ENCODE measurements at regions of chr10 and their contacts with region 1.

Region 1: DNA sequence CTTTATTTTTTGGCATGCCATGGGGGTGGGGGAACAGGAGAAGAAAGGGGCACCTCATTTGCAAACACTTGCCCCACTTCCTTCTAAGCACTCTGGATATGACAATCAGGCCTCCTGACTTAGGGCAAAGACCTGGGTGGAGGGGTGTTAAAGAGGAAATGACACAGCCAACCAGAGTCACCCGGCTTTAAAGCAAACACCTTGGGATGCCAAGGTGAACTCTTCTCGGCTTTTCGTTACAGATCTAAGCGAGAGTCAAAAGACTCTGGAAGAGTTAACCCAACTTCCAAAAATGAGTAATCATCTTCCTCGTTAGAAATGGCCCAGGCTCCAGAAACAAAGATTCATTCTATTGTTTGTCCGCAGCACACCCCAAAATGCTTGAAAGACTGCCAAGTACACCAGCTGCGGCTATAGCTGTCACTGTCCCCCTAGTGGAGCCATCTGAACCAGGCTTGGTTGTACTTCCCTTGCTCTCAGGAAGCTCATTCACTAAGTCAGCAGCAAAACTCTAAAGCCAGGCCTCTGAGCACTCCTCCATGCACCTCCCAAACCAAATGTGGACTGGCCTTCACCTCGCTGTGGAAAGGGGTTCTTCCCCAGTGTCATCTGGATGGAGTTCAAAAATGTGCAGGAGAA is 24.8 kb downstream of the FAM53B start:
- DNase-seq: peak in 8 of 9 donors; percentile 49 to 85 (median 80)
- ATAC-seq: peak; percentile 63
- H3K4me3 ChIP-seq: peak overlapping the region; percentile 19
- H3K4me3 Mint-ChIP-seq: peak overlapping the region; percentile 46 to 91 (median 73)
- H3K27ac ChIP-seq: peak overlapping the region; percentile 72
- H3K27ac Mint-ChIP-seq: peak overlapping the region; percentile 83 to 99 (median 94)
- H3K4me1 ChIP-seq: peaks cover 82 to 96% of the 10 kb centered on the region in 2 donors
- H3K4me1 Mint-ChIP-seq: peaks cover 80 to 99% (median 88%) of the 10 kb centered on the region in 7 donors
- H3K27me3 ChIP-seq: no peaks in the 10 kb centered on the region
- H3K27me3 Mint-ChIP-seq: no peaks in the 10 kb centered on the region

Region 2: GRCh38 chr10:124530215-124530665 is 189.1 kb before region 1 on chr10:
- CTCF ChIA-PET with region 1: interaction called, 4 read pairs
- POLR2A ChIA-PET with region 1: interaction called, 3 read pairs
- intact Hi-C with region 1: loop called in 1 of 2 experiments (anchors 1 kb)
- DNase-seq: peak; percentile 68 to 87 (median 80)
- ATAC-seq: peak; percentile 95
- H3K4me3 ChIP-seq: no peak overlapping the region
- H3K4me3 Mint-ChIP-seq: peak overlapping the region in 3 of 10 donors; percentile 18 to 59 (median 21)
- H3K27ac ChIP-seq: no peak overlapping the region
- H3K27ac Mint-ChIP-seq: peak overlapping the region in 3 of 9 donors; percentile 14 to 53 (median 38)
- H3K4me1 ChIP-seq: no peaks in the 10 kb centered on the region
- H3K4me1 Mint-ChIP-seq: peaks cover 3 to 16% (median 5%) of the 10 kb centered on the region in 7 donors
- H3K27me3 ChIP-seq: no peaks in the 10 kb centered on the region
- H3K27me3 Mint-ChIP-seq: peaks cover 0 to 7% (median 0%) of the 10 kb centered on the region in 5 donors

Region 3: GRCh38 chr10:124626759-124627380 is 92.5 kb before region 1 on chr10:
- CTCF ChIA-PET with region 1: interaction called, 14 read pairs
- POLR2A ChIA-PET with region 1: interaction called, 17 read pairs
- intact Hi-C with region 1: loop called in 1 of 2 experiments (anchors 1 kb)
- DNase-seq: peak in 6 of 9 donors; percentile 29 to 57 (median 40)
- ATAC-seq: peak; percentile 77
- H3K4me3 ChIP-seq: peak overlapping the region; percentile 1
- H3K4me3 Mint-ChIP-seq: peak overlapping the region in 9 of 10 donors; percentile 46 to 71 (median 63)
- H3K27ac ChIP-seq: peak overlapping the region; percentile 16
- H3K27ac Mint-ChIP-seq: peak overlapping the region; percentile 71 to 91 (median 83)
- H3K4me1 ChIP-seq: peaks cover 34 to 38% of the 10 kb centered on the region in 2 donors
- H3K4me1 Mint-ChIP-seq: peaks cover 25 to 58% (median 48%) of the 10 kb centered on the region in 7 donors
- H3K27me3 ChIP-seq: no peaks in the 10 kb centered on the region
- H3K27me3 Mint-ChIP-seq: no peaks in the 10 kb centered on the region

Region 4: GRCh38 chr10:124647421-124648130 is 71.8 kb before region 1 on chr10:
- CTCF ChIA-PET with region 1: interaction called, 131 read pairs
- POLR2A ChIA-PET with region 1: interaction called, 63 read pairs
- intact Hi-C with region 1: loop called (anchors 1 kb)
- DNase-seq: peak in 8 of 9 donors; percentile 63 to 79 (median 72)
- ATAC-seq: peak; percentile 85
- H3K4me3 ChIP-seq: peak overlapping the region; percentile 34
- H3K4me3 Mint-ChIP-seq: peak overlapping the region; percentile 69 to 87 (median 80)
- H3K27ac ChIP-seq: peak overlapping the region; percentile 62
- H3K27ac Mint-ChIP-seq: peak overlapping the region; percentile 86 to 97 (median 95)
- H3K4me1 ChIP-seq: peaks cover 68 to 79% of the 10 kb centered on the region in 2 donors
- H3K4me1 Mint-ChIP-seq: peaks cover 46 to 100% (median 87%) of the 10 kb centered on the region in 7 donors
- H3K27me3 ChIP-seq: no peaks in the 10 kb centered on the region
- H3K27me3 Mint-ChIP-seq: no peaks in the 10 kb centered on the region

Region 5: GRCh38 chr10:124671486-124672075 is 47.8 kb before region 1 on chr10:
- CTCF ChIA-PET with region 1: interaction called, 25 read pairs
- POLR2A ChIA-PET with region 1: interaction called, 24 read pairs
- intact Hi-C with region 1: no loop called
- DNase-seq: peak in 5 of 9 donors; percentile 31 to 60 (median 48)
- ATAC-seq: peak; percentile 71
- H3K4me3 ChIP-seq: peak overlapping the region; percentile 34
- H3K4me3 Mint-ChIP-seq: peak overlapping the region in 9 of 10 donors; percentile 55 to 93 (median 73)
- H3K27ac ChIP-seq: peak overlapping the region; percentile 19
- H3K27ac Mint-ChIP-seq: peak overlapping the region; percentile 23 to 93 (median 89)
- H3K4me1 ChIP-seq: peaks cover 83 to 97% of the 10 kb centered on the region in 2 donors
- H3K4me1 Mint-ChIP-seq: peaks cover 40 to 92% (median 82%) of the 10 kb centered on the region in 7 donors
- H3K27me3 ChIP-seq: no peaks in the 10 kb centered on the region
- H3K27me3 Mint-ChIP-seq: no peaks in the 10 kb centered on the region

Region 6: DNA sequence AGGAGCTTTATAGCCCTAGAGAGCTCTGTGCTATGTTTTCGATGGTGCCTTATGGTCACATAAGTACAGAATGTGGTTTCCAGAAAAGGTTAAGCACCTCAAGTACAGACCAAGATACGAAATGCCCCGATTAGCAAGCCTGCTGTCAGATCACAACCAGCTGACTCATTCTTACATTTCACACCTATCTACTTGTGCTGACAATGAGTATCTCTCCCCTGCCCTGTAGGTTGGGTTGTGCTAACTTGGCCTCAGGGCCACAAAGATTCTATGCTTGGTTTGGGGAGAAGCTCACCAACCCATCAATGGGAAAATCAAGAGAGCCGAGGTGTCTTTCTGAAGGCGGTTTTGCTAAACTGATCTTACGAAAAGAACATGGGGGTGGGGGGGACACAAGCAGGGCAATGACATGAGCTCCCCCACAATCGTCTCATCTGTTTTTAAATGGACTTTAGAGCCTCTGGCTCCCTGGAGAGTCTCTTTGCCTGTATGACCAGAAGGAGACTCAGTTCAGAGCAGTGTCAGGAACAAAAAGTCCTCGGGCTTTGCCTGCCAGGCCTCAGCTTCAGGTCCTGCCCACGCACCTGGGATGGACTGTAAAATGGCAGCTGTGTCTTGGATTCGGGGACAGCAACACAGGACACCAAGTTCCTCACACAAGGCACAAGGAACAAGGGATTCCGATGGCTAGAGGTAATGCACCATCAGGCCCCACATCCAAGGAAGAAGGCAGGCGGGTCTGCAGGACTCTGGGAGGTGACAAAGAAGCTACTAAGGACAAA is 30.3 kb before region 1 on chr10:
- CTCF ChIA-PET with region 1: interaction called, 55 read pairs
- POLR2A ChIA-PET with region 1: interaction called, 7 read pairs
- intact Hi-C with region 1: loop called (anchors 1 kb)
- DNase-seq: peak in 1 of 9 donors; percentile 61
- ATAC-seq: peak; percentile 87
- H3K4me3 ChIP-seq: no peak overlapping the region
- H3K4me3 Mint-ChIP-seq: peak overlapping the region in 1 of 10 donors; percentile 69
- H3K27ac ChIP-seq: no peak overlapping the region
- H3K27ac Mint-ChIP-seq: peak overlapping the region in 6 of 9 donors; percentile 15 to 88 (median 30)
- H3K4me1 ChIP-seq: peaks cover 24 to 90% of the 10 kb centered on the region in 2 donors
- H3K4me1 Mint-ChIP-seq: peaks cover 39 to 73% (median 49%) of the 10 kb centered on the region in 7 donors
- H3K27me3 ChIP-seq: no peaks in the 10 kb centered on the region
- H3K27me3 Mint-ChIP-seq: no peaks in the 10 kb centered on the region

Region 7: DNA sequence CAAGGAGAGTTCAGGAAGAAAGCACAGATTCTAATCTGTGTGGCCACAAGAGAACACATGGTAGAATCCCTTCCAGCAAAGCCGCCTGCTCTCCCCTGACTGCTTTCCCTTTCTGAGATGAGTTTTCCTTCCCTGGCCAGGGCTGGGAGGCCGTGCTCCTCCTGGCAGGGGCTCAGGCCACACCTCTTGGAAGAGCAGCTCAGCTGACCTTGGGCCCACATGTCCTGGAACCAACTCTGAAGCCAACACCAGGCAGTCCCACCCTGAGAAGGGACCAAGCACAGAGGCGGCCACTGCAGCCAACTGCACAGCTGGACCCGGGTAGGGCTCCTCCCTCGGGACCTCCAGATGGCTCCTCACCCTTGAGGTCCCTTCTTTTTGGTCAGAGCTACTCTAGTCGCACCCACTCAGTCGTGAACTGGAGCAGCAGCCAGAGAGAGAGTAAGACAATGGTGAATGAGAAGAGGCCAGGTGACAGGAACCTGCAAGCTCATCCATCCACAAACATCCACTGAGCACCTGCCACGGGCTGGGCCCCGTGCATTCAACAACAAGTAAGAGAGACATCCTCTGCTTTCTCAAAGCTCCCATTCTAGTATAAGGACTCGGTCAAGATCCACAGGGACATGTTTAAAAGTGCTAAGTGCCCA is 15.4 kb before region 1 on chr10:
- CTCF ChIA-PET with region 1: interaction called, 81 read pairs
- POLR2A ChIA-PET with region 1: interaction called, 271 read pairs
- intact Hi-C with region 1: loop called in 1 of 2 experiments (anchors 1 kb)
- DNase-seq: no peak
- ATAC-seq: no peak
- H3K4me3 ChIP-seq: no peak overlapping the region
- H3K4me3 Mint-ChIP-seq: peak overlapping the region in 7 of 10 donors; percentile 33 to 84 (median 60)
- H3K27ac ChIP-seq: peak overlapping the region; percentile 25
- H3K27ac Mint-ChIP-seq: peak overlapping the region; percentile 56 to 98 (median 92)
- H3K4me1 ChIP-seq: peaks cover 80 to 92% of the 10 kb centered on the region in 2 donors
- H3K4me1 Mint-ChIP-seq: peaks cover 80 to 98% (median 92%) of the 10 kb centered on the region in 7 donors
- H3K27me3 ChIP-seq: no peaks in the 10 kb centered on the region
- H3K27me3 Mint-ChIP-seq: no peaks in the 10 kb centered on the region

Region 8: GRCh38 chr10:125489731-125490130 is 770.4 kb after region 1 on chr10:
- CTCF ChIA-PET with region 1: no interaction called
- POLR2A ChIA-PET with region 1: no interaction called
- intact Hi-C with region 1: no loop called
- DNase-seq: no peak
- ATAC-seq: no peak
- H3K4me3 ChIP-seq: no peak overlapping the region
- H3K4me3 Mint-ChIP-seq: no peak overlapping the region
- H3K27ac ChIP-seq: no peak overlapping the region
- H3K27ac Mint-ChIP-seq: no peak overlapping the region
- H3K4me1 ChIP-seq: no peaks in the 10 kb centered on the region
- H3K4me1 Mint-ChIP-seq: no peaks in the 10 kb centered on the region
- H3K27me3 ChIP-seq: peaks cover 0 to 3% of the 10 kb centered on the region in 2 donors
- H3K27me3 Mint-ChIP-seq: peaks cover 0 to 25% (median 11%) of the 10 kb centered on the region in 5 donors

Region 9: DNA sequence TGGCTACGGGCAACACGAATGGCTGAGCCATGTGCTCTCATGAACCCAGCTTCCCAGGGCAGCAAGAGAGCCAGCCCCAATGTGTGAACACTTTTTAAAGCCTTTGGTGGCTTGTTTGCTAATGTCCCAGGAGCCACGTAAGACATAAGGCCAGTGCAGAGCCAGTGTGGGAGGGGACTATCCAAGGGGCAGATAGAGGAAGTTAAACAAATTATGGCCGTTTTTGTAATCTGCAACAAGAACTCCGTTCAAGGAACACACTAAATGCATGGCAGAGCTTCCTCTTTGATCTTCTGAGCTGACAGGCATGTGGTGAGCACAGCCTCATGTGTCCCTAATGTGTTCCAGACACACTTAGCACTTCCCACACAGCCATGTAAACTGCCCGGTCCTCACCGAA is 830.3 kb after region 1 on chr10:
- CTCF ChIA-PET with region 1: no interaction called
- POLR2A ChIA-PET with region 1: no interaction called
- intact Hi-C with region 1: no loop called
- DNase-seq: no peak
- ATAC-seq: no peak
- H3K4me3 ChIP-seq: no peak overlapping the region
- H3K4me3 Mint-ChIP-seq: no peak overlapping the region
- H3K27ac ChIP-seq: no peak overlapping the region
- H3K27ac Mint-ChIP-seq: no peak overlapping the region
- H3K4me1 ChIP-seq: no peaks in the 10 kb centered on the region
- H3K4me1 Mint-ChIP-seq: no peaks in the 10 kb centered on the region
- H3K27me3 ChIP-seq: no peaks in the 10 kb centered on the region
- H3K27me3 Mint-ChIP-seq: peaks cover 0 to 21% (median 18%) of the 10 kb centered on the region in 5 donors

Region 10: GRCh38 chr10:125928928-125929585 is 1209.7 kb after region 1 on chr10:
- CTCF ChIA-PET with region 1: no interaction called
- POLR2A ChIA-PET with region 1: no interaction called
- intact Hi-C with region 1: no loop called
- DNase-seq: no peak
- ATAC-seq: no peak
- H3K4me3 ChIP-seq: no peak overlapping the region
- H3K4me3 Mint-ChIP-seq: no peak overlapping the region
- H3K27ac ChIP-seq: no peak overlapping the region
- H3K27ac Mint-ChIP-seq: no peak overlapping the region
- H3K4me1 ChIP-seq: no peaks in the 10 kb centered on the region
- H3K4me1 Mint-ChIP-seq: no peaks in the 10 kb centered on the region
- H3K27me3 ChIP-seq: no peaks in the 10 kb centered on the region
- H3K27me3 Mint-ChIP-seq: peaks cover 7 to 19% (median 13%) of the 10 kb centered on the region in 5 donors